ENCODE measurements at regions of chr3 and their contacts with region 1.

Region 1: GRCh38 chr3:44529927-44530326 is 25.1 kb upstream of the ZKSCAN7 start:
- DNase-seq: no peak

Region 2: GRCh38 chr3:44914936-44915335 is 385.0 kb after region 1 on chr3:
- intact Hi-C with region 1: loop called in 1 of 2 experiments (anchors 5 kb)
- DNase-seq: no peak